ENCODE measurements at regions of chr2 and their contacts with region 1.

Region 1: DNA sequence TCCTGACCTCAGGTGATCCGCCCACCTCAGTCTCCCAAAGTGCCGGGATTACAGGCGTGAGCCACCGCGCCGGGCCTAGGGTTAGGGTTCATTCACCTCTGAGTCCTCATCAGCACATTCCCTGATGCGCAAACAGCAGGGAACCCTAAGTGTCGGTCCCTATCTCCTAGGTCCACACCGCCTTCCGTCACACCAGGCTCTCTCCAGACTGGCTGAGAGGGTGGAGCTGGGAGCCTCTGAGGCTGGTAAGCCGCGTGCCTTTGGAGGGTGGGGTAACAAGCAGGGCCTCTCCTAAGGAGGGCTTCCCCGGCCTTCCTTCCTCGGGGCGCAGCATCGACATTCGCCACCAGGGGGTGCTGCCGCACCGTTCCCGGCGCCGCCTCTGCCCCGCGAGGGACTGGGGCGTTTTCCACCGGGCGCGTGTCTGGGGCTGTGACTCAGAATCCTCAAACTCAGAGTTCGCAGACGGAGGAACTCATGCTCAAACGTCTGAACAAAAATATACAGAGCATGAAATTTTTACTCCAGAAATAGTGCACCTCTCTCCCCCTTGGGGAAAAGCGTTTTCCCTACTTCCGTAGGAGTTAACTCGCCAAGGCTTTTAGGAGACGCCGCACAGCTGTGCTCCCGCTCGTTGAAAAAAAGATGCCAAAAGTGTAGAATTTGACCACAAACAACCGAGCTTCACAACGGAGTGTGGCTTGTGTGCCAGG is 63.9 kb upstream of the ASAP2 start:
- DNase-seq: peak; percentile 59 to 91 (median 80)
- H3K4me3 ChIP-seq: peak overlapping the region in 57 of 59 donors; percentile 4 to 64 (median 38)
- H3K27ac ChIP-seq: peak overlapping the region in 12 of 59 donors; percentile 13 to 65 (median 52)
- H3K27me3 ChIP-seq: no peaks in the 10 kb centered on the region
- CTCF ChIP-seq: peak; percentile 98 to 100 (median 100)

Region 2: DNA sequence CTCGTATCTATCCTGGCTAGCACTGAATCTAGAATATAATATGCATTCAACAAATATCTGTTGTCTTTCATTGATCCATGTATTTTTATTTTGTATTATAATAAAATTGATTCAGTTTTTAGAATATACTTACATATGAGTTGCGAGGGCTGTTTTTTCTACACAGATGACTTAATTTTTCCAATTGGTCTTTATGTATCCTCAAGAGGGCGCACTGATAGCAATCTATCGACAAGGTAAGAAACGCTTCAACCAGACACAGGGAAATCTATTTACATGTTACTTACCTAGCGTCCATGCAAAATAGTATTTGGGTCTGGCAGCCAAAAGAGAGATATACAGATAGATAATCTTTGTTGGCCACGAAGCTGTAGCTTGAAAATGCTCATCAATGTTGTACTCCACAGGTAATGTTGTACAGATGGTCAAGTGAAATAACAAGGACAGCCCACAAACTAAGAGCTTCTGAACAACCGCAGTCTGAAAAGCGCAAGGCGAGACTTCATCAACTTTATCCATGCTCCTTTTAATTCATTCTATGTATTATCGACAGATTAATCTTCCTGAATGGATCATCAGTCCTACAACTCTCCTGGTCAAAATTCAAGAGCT is 269.8 kb before region 1 on chr2:
- intact Hi-C with region 1: loop called (anchors 2 to 5 kb)
- DNase-seq: no peak
- H3K4me3 ChIP-seq: no peak overlapping the region
- H3K27ac ChIP-seq: no peak overlapping the region
- H3K27me3 ChIP-seq: no peaks in the 10 kb centered on the region
- CTCF ChIP-seq: peak; percentile 37 to 83 (median 67)

Region 3: DNA sequence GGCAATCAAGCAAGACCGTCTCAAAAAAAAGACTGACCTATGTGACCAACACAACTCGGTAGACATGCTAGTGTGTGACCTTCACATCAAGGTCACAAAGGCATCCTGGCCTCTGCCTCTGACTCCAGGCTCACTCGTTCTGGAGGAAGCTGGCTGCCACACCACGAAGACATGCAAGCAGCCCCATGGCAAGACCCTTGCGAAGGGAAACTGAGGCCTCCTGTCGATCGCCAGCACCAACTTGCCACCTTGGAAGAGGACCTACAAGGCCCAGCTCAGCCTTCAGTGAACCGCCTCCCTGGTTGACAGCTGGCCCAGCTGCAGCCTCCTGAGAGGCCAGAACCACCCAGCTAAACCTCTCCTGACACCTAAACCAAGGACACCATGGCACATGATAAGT is 15.4 kb before region 1 on chr2:
- intact Hi-C with region 1: no loop called
- DNase-seq: no peak
- H3K4me3 ChIP-seq: no peak overlapping the region
- H3K27ac ChIP-seq: no peak overlapping the region
- H3K27me3 ChIP-seq: no peaks in the 10 kb centered on the region
- CTCF ChIP-seq: no peak

Region 4: GRCh38 chr2:9187620-9188214 is 45.0 kb after region 1 on chr2:
- intact Hi-C with region 1: loop called in 1 of 2 experiments (anchors 5 kb)
- DNase-seq: no peak
- H3K4me3 ChIP-seq: no peak overlapping the region
- H3K27ac ChIP-seq: no peak overlapping the region
- H3K27me3 ChIP-seq: no peaks in the 10 kb centered on the region
- CTCF ChIP-seq: no peak

Region 5: GRCh38 chr2:9333591-9334171 is 191.0 kb after region 1 on chr2:
- intact Hi-C with region 1: loop called (anchors 1 to 10 kb)
- DNase-seq: peak in 7 of 10 donors; percentile 32 to 73 (median 50)
- H3K4me3 ChIP-seq: no peak overlapping the region
- H3K27ac ChIP-seq: peak overlapping the region in 1 of 59 donors; percentile 3
- H3K27me3 ChIP-seq: no peaks in the 10 kb centered on the region
- CTCF ChIP-seq: peak; percentile 31 to 80 (median 62)

Region 6: DNA sequence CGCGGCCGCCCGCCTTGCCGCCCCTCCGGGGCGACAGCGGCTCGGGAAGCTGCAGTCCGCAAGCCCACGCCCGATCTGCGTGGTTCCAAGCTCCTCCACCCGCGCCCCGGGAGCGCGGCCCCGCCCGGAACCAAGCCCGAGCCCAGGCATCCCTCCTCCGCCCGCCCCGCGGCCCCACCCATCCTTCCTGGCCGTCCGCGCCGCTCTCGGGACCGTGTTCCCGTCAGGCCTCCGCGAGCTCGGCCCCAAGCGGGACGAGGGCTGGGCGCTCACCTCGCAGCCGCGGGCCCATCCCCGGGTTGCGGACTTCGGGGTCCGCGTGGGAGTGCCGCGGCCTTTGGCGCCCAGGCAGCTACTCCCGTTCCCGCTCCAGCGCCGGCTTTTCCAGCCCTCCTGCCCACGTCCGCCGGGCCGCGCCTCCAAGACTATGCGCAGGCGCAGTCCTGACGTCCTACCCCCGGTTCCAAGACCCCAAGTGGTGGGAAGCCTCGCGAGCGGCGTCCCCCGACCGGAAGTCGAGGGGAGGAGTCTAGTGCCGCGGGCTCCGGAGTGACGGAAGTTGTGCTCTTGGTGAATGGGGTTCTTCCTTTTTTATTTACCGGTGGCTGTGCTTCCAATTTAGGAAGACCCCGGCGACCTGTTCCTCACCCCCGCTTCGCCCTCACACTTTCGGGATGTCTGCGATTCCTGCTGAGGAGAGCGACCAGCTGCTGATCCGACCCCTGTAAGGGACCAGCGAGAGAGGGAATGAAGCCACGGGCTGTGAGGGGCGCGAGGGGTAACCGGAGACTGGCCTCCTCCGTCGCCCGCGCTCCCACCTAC is 280.6 kb after region 1 on chr2 and contains the starts of genes CPSF3 and ITGB1BP1:
- intact Hi-C with region 1: loop called (anchors 2 to 5 kb)
- DNase-seq: peak; percentile 92 to 98 (median 96)
- H3K4me3 ChIP-seq: peak within 1 kb of the TSS; percentile 55 to 100 (median 94)
- H3K27ac ChIP-seq: peak within 1 kb of the TSS; percentile 74 to 98 (median 92)
- H3K27me3 ChIP-seq: no peaks in the 10 kb centered on the region
- CTCF ChIP-seq: peak in 35 of 56 donors; percentile 4 to 64 (median 33)
- total RNA-seq, gene CPSF3: 11.9 to 33.6 (median 22.9) TPM
- total RNA-seq, gene ITGB1BP1: 75.1 to 226 (median 141) TPM

Region 7: DNA sequence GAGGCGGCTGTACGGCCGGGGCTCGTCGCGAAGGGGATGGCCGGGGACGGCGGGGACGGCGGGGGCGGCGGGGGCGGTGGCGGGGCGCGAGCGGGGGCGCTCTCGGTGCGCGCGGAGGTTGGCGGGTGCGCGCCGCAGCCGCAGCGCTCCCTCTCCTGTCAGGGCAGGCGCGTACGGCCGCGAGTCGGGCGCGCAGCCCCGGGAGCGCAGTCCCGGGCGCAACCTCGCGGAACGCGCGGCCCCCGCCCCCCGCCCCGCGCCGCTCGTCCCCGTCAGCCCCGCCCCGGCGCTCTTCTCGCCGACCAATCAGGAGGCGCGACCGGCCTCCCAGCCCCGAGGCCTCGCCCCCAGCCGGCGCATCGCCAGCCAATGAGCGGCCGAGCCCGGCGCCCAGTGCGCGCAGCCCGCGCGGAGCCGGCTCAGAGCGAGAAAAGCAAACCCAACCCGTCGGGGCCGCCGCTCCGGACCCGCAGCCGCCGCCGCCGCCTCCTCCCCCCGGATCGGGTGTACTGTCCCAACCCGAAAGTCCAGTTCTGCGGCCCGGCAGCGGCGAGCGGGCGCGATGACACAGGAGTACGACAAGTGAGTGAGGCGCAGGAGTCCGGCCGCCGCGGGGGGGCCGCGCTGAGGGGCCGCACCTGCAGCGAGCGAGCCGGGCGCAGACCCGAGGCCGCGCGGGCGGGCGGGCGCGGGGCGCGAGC is 808.7 kb after region 1 on chr2 and contains the start of gene GRHL1:
- intact Hi-C with region 1: loop called in 1 of 2 experiments (anchors 10 kb)
- DNase-seq: peak; percentile 82 to 98 (median 90)
- H3K4me3 ChIP-seq: peak within 1 kb of the TSS; percentile 47 to 87 (median 73)
- H3K27ac ChIP-seq: peak within 1 kb of the TSS in 32 of 59 donors; percentile 26 to 81 (median 66)
- H3K27me3 ChIP-seq: peaks cover 0 to 2% (median 0%) of the 10 kb centered on the region in 45 donors
- CTCF ChIP-seq: peak in 15 of 56 donors; percentile 4 to 57 (median 16)
- total RNA-seq, gene GRHL1: 1.6 to 10.9 (median 6.4) TPM

Measured in dorsolateral prefrontal cortex (tissue), 120 donors.